Left cardiac atrium (tissue), 4 donors: ENCODE measurements at regions of chr2 and their contacts with region 1.

Region 1: GRCh38 chr2:120252225-120253021 is at the start of gene RALB:
- DNase-seq: peak; percentile 100
- ATAC-seq: peak; percentile 96
- total RNA-seq, gene RALB: 52.5 to 54.7 TPM

Region 2: DNA sequence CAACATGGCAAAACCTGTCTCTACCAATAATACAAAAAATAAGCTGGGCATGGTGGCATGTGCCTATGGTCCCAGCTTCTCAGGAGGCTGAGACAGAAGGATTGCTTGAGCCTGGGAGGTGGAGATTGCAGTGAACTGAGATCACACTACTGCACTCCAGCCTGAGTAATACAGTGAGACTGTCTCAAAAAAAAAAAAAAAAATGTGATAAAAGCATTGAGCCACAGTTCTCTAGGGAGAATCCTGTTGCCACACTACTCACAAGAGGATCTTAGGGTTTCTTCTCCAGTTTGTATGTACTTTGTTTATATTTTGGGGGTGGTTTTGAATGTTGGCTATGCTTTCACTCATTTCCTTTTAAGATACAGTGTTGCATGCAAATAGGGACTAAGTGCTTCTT is 91.2 kb before region 1 on chr2:
- intact Hi-C with region 1: no loop called
- DNase-seq: no peak
- ATAC-seq: no peak

Region 3: DNA sequence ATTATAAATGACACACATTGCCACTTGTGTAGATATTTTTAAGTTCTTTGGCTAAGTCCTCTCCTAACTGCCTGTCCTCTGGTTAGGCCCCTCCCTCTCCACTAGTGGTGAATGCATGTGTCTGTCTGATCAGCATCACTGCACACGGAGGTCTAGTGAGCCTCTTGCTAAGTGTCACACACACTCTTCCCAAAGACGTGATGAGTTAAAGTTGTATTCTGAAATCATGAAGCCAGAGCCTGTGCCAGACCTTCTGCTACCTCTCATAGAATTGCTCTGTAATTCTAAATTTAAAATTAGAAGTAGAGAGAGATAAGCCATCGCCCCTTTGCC is 41.6 kb after region 1 on chr2:
- intact Hi-C with region 1: loop called in 1 of 2 experiments (anchors 5 kb)
- DNase-seq: no peak
- ATAC-seq: peak; percentile 84 to 96

Region 4: DNA sequence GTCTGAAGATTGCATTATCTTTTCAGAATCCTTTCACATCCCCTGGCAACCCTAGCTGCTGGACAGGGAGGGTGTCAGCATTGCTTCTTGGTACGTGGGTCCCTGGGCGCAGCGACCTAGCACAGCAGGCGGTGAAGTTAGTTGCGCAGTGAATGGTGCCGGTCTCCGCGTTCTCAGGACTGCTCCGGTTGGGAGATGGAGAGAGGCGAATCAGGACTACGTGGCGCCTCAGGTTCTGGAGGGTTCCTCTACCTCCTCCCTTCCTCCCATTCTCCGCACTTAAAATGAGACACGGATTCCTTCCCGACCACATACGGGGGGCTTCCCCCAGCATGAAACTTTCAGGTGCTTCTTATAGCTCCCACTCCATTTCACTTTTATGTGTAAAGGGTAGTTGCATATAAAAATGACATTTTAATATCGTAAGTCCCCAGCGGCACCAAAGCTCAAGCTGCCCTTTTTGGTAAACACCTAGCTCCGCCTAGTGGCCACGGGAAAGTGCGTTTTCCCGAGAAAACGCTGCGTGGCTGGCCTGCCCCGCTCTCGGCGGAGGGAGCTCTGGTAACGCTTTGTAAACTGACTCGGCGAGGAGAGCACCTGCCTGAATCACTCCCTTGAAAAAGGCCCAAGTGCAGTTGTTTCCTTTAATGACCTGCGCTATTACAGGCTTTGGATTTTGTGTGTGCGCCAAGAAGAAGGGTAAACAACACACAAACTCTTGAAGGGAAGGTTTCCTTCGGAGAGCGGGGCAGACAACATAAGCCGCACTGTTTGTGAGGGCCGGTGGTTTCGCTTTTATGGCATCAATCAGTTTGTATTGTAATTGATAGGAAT is 60.7 kb after region 1 on chr2:
- intact Hi-C with region 1: loop called in 1 of 2 experiments (anchors 5 kb)
- DNase-seq: peak; percentile 80
- ATAC-seq: peak; percentile 83 to 86